ENCODE measurements at regions of chr9 and their contacts with region 1.

Region 1: GRCh38 chr9:131046581-131047202 is 37.7 kb downstream of the LAMC3 start:
- DNase-seq: peak; percentile 83
- ATAC-seq: peak; percentile 95
- H3K4me3 Mint-ChIP-seq: no peak overlapping the region
- H3K27ac Mint-ChIP-seq: no peak overlapping the region
- H3K4me1 Mint-ChIP-seq: no peaks in the 10 kb centered on the region
- H3K27me3 Mint-ChIP-seq: no peaks in the 10 kb centered on the region
- CTCF ChIP-seq: peak; percentile 85

Region 2: DNA sequence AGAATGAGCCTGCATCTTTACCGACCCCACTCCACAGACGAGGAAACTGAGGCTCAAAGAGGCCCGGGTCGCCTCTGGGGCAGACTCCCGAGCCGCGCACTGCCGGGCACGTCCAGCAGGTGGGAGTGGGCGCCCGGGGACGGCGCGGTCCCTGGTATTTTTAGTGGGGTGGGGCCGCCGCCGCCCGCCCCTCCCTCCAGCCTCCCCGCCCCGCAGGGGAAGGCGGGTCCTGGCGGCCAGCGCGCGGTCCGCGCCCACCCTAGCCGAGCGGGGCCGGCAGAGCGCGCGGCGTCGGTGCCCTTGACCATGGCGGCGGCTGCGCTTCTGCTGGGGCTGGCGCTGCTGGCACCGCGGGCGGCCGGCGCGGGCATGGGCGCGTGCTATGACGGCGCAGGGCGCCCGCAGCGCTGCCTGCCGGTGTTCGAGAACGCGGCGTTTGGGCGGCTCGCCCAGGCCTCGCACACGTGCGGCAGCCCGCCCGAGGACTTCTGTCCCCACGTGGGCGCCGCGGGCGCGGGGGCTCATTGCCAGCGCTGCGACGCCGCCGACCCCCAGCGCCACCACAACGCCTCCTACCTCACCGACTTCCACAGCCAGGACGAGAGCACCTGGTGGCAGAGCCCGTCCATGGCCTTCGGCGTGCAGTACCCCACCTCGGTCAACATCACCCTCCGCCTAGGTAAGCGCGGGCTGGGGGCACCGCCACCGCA is 37.6 kb before region 1 on chr9 and contains the start of gene LAMC3:
- CTCF ChIA-PET with region 1: interaction called, 30 read pairs
- POLR2A ChIA-PET with region 1: no interaction called
- DNase-seq: peak; percentile 58
- ATAC-seq: peak; percentile 66
- H3K4me3 Mint-ChIP-seq: peak within 1 kb of the TSS; percentile 64
- H3K27ac Mint-ChIP-seq: no peak within 1 kb of the TSS
- H3K4me1 Mint-ChIP-seq: peaks cover 30% of the 10 kb centered on the region
- H3K27me3 Mint-ChIP-seq: peaks cover 16% of the 10 kb centered on the region
- CTCF ChIP-seq: no peak
- total RNA-seq, gene LAMC3: 35.9 to 50.9 TPM (median 36.0 TPM) in 3 replicates

Region 3: GRCh38 chr9:131018621-131019020 is 28.1 kb before region 1 on chr9:
- CTCF ChIA-PET with region 1: interaction called, 35 read pairs
- POLR2A ChIA-PET with region 1: no interaction called
- DNase-seq: no peak
- ATAC-seq: peak; percentile 38
- H3K4me3 Mint-ChIP-seq: no peak overlapping the region
- H3K27ac Mint-ChIP-seq: peak overlapping the region; percentile 92
- H3K4me1 Mint-ChIP-seq: peaks cover 16% of the 10 kb centered on the region
- H3K27me3 Mint-ChIP-seq: no peaks in the 10 kb centered on the region
- CTCF ChIP-seq: no peak

Region 4: DNA sequence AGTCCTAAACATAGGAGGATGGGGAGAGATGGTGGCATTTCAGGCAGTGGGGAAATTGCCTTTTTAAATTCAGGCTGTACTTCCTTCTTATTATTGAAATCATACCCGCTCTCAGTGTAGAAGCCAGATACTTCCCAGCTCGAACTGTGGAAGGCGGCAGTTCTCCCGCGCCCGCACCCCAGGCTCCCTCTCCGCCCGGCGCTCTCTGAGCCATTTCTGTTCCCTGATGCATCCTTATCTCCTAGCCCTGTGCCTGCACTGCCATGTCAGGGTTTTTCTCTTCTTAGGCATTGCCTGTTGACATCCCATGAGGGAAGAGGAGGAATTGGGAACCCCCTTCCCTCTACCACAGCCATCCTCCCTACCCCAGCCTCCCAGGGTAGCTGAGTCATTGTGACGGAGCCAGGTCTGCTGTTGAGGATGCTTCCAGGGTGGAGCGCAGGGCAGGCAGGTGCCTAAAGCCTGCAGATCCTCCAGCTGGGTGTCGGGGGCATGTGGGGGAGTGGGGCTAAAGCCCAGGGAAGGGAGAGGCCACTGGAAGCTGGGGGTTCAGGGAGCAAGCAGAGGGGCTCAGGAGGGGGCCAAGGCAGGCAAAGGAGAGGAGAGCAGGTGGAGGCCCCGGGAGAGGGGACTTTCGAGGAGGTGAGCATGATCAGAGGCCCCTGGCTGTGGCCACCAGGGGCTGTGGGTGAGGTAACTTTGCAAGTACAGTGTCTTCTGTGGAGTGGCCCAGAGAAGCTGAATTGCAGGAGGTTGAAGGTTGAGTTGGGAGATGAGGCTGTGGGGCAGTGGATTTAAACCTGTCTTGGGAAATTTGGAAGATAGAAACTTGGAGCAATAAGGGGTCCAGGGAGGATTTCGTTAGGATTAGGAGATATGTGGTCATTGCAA is 21.5 kb before region 1 on chr9:
- CTCF ChIA-PET with region 1: interaction called, 19 read pairs
- POLR2A ChIA-PET with region 1: no interaction called
- DNase-seq: no peak
- ATAC-seq: no peak
- H3K4me3 Mint-ChIP-seq: no peak overlapping the region
- H3K27ac Mint-ChIP-seq: peak overlapping the region; percentile 51
- H3K4me1 Mint-ChIP-seq: no peaks in the 10 kb centered on the region; the same call in 1 of the 2 replicates
- H3K27me3 Mint-ChIP-seq: no peaks in the 10 kb centered on the region
- CTCF ChIP-seq: no peak

Region 5: DNA sequence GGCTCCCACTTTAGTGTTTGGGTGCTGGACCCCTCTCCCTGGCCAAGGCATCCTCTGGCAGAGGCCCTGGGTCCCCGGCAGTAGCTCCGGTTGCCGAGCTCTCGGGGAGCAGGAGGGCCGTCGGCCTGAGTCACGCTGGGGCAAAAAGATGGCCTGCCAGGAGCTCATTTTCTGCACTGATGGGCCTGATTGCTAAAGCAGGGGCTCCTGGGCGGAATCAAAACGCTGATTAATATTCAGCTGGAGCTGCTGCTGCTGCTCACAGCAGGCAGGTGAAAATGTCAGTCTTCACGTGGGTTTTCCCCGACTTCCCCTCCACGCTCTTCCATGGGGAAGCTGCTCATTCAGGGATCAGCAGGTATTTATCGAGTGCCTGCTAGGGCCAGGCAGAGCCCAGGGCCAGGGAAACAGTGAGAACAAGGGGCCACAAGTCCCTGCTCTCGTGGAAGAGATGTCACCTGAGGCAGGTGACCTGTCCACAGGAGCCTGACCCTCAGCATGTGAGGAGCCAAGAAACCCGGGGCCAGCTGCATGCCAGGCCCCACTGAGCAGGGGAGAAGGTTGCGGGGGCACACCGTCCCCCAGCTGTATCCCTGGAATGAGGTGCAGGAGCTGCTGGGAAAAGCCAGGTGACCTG is 15.6 kb before region 1 on chr9:
- CTCF ChIA-PET with region 1: interaction called, 33 read pairs
- POLR2A ChIA-PET with region 1: no interaction called
- DNase-seq: no peak
- ATAC-seq: no peak
- H3K4me3 Mint-ChIP-seq: no peak overlapping the region
- H3K27ac Mint-ChIP-seq: no peak overlapping the region
- H3K4me1 Mint-ChIP-seq: no peaks in the 10 kb centered on the region
- H3K27me3 Mint-ChIP-seq: no peaks in the 10 kb centered on the region
- CTCF ChIP-seq: no peak

Region 6: DNA sequence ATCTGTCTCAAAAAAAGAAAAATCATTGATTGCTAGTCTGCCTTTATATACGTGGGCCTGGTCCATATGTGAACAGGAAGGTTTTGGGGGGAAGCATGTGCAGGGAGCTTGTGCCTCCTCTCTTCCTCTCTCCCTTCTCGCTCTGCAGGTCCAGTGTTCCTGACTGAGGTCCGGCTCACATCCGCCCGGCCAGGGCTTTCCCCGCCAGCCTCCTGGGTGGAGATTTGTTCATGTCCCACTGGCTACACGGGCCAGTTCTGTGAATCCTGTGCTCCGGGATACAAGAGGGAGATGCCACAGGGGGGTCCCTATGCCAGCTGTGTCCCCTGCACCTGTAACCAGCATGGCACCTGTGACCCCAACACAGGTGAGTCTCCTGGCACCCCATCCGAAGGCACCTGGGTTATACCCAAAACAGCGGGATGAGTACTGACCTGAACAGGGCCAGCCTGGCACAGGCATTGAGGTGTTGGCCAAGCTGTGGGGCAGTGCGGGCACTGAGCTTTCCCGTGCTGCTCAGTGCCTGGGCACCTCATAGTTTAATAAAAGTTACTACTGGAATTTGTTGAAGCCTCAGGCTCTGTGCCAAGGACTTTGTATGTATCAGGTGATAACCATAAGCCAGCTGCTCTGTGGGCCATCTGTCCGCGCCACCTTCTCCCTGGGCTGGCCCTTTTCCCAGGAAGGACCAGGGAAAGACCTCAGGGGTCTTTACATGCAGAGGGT is 10.3 kb after region 1 on chr9:
- CTCF ChIA-PET with region 1: interaction called, 10 read pairs
- POLR2A ChIA-PET with region 1: no interaction called
- DNase-seq: no peak
- ATAC-seq: no peak
- H3K4me3 Mint-ChIP-seq: no peak overlapping the region
- H3K27ac Mint-ChIP-seq: no peak overlapping the region
- H3K4me1 Mint-ChIP-seq: no peaks in the 10 kb centered on the region
- H3K27me3 Mint-ChIP-seq: no peaks in the 10 kb centered on the region
- CTCF ChIP-seq: no peak

Region 7: DNA sequence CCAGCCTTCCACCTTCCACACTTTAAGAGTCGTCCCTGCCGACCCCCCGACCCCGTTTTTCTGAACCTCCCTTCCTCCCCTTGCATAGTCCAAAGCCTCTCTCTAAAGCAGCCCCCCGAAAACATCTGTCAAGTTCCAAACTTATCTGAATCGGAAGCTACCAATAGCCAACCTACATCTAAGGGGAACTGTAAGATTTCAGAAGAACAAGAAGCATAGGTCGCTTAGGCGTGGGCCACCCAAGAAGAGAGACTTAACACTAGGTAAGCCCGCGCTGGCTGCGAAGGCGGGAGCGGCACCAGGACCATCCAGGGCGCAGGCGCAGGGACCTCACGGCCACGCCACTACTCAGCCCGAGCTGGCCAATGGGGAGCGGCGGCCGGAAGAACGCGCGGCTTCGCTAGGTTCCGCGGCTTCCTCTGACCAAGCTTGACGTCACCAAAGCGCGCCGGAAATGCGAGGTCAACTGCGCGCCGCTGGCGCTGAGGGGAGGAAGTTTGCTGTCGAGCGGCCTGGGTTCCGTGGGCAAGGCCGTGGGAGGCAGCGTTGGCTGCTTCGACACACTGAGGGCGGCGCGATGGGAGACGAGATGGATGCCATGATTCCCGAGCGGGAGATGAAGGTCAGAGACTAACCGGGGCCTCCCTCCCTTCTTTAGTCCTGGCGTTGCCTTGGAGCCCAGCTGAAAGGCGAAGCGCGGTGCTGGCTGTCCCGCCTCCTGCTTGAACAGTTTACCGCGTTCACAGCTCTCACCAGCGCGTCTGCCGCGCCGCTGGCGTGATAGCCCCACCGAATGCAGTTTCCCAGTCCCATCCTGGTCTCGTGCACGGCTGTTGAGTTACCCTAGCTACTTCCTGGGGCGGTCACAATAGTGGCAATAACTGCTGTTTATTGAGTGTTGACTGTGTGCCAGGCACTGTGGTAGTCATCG is 78.7 kb after region 1 on chr9 and contains the start of gene NUP214:
- CTCF ChIA-PET with region 1: interaction called, 10 read pairs
- POLR2A ChIA-PET with region 1: interaction called, 6 read pairs
- DNase-seq: peak; percentile 99
- ATAC-seq: peak; percentile 100
- H3K4me3 Mint-ChIP-seq: peak within 1 kb of the TSS; percentile 99
- H3K27ac Mint-ChIP-seq: peak within 1 kb of the TSS; percentile 100
- H3K4me1 Mint-ChIP-seq: peaks cover 10% of the 10 kb centered on the region
- H3K27me3 Mint-ChIP-seq: peaks cover 3% of the 10 kb centered on the region; the same call in 1 of the 2 replicates
- CTCF ChIP-seq: no peak
- total RNA-seq, gene NUP214: 39.9 to 42.8 TPM (median 41.8 TPM) in 3 replicates